ENCODE measurements at regions of chr13 and their contacts with region 1.

Region 1: GRCh38 chr13:36275190-36276002 is 22.2 kb downstream of the CCDC169 start:
- DNase-seq: peak; percentile 46 to 71 (median 66)
- H3K4me3 ChIP-seq: no peak overlapping the region
- H3K27ac ChIP-seq: no peak overlapping the region
- H3K4me1 ChIP-seq: no peaks in the 10 kb centered on the region
- H3K27me3 ChIP-seq: no peaks in the 10 kb centered on the region

Region 2: GRCh38 chr13:35978603-35979316 is 296.6 kb before region 1 on chr13:
- CTCF ChIA-PET with region 1: interaction called, 77 read pairs
- POLR2A ChIA-PET with region 1: no interaction called
- DNase-seq: peak; percentile 45 to 70 (median 63)
- H3K4me3 ChIP-seq: no peak overlapping the region
- H3K27ac ChIP-seq: no peak overlapping the region
- H3K4me1 ChIP-seq: no peaks in the 10 kb centered on the region
- H3K27me3 ChIP-seq: peaks cover 0 to 2% (median 0%) of the 10 kb centered on the region in 5 experiments

Region 3: GRCh38 chr13:36244073-36244472 is 31.3 kb before region 1 on chr13:
- CTCF ChIA-PET with region 1: no interaction called
- POLR2A ChIA-PET with region 1: no interaction called
- DNase-seq: no peak
- H3K4me3 ChIP-seq: no peak overlapping the region
- H3K27ac ChIP-seq: no peak overlapping the region
- H3K4me1 ChIP-seq: no peaks in the 10 kb centered on the region
- H3K27me3 ChIP-seq: no peaks in the 10 kb centered on the region

Region 4: DNA sequence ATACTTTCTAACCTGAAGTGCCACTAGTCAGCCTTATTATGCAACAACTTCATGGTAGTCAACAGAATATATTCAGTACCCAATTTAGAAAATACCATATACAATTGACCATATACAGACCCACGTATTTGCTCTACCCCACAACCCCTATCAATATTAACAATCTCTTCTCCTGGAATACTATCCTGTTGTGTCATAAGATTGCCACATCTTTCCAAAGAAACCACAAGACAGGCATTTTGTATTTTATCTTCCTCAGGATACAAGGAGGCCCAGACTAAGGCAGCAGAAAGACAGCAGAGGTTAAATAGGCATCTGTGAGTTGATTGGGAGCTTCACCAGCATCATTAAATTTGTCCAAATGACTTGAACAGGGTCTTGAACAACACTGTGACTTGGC is 66.3 kb after region 1 on chr13:
- CTCF ChIA-PET with region 1: no interaction called
- POLR2A ChIA-PET with region 1: no interaction called
- DNase-seq: no peak
- H3K4me3 ChIP-seq: no peak overlapping the region
- H3K27ac ChIP-seq: no peak overlapping the region
- H3K4me1 ChIP-seq: peaks cover 7 to 27% (median 16%) of the 10 kb centered on the region in 4 experiments
- H3K27me3 ChIP-seq: no peaks in the 10 kb centered on the region

Region 5: GRCh38 chr13:36480726-36481427 is 205.5 kb after region 1 on chr13:
- CTCF ChIA-PET with region 1: no interaction called
- POLR2A ChIA-PET with region 1: no interaction called
- DNase-seq: peak in 2 of 3 donors; percentile 51 to 62
- H3K4me3 ChIP-seq: no peak overlapping the region
- H3K27ac ChIP-seq: no peak overlapping the region
- H3K4me1 ChIP-seq: peaks cover 0 to 9% (median 6%) of the 10 kb centered on the region in 4 experiments
- H3K27me3 ChIP-seq: no peaks in the 10 kb centered on the region

Region 6: GRCh38 chr13:36918246-36919131 is 643.1 kb after region 1 on chr13:
- CTCF ChIA-PET with region 1: no interaction called
- POLR2A ChIA-PET with region 1: no interaction called
- DNase-seq: peak in 2 of 3 donors; percentile 52 to 69
- H3K4me3 ChIP-seq: peak overlapping the region in 5 of 7 experiments; percentile 58 to 76 (median 62)
- H3K27ac ChIP-seq: no peak overlapping the region
- H3K4me1 ChIP-seq: peaks cover 4 to 13% (median 11%) of the 10 kb centered on the region in 4 experiments
- H3K27me3 ChIP-seq: peaks cover 19 to 45% (median 23%) of the 10 kb centered on the region in 5 experiments